H1 (cell line): ENCODE measurements at regions of chr2 and their contacts with region 1.

Region 1: GRCh38 chr2:121071034-121071504 is 213.9 kb downstream of the TFCP2L1 start:
- DNase-seq: peak in 1 of 2 experiments; percentile 98
- H3K4me3 ChIP-seq: no peak overlapping the region
- H3K27ac ChIP-seq: no peak overlapping the region
- H3K4me1 ChIP-seq: peaks cover 0 to 15% (median 13%) of the 10 kb centered on the region in 4 experiments; a peak in 6 of 7 replicates
- H3K27me3 ChIP-seq: peaks cover 0 to 7% (median 6%) of the 10 kb centered on the region in 4 experiments; a peak in 6 of 7 replicates
- CTCF ChIP-seq: peak in 2 of 3 experiments; percentile 78 to 84; a peak in 3 of 4 replicates
- EP300 ChIP-seq: no peak
- POLR2A ChIP-seq: no peak
- RAD21 ChIP-seq: peak; percentile 88 to 93

Region 2: GRCh38 chr2:120686511-120687168 is 384.4 kb before region 1 on chr2:
- CTCF ChIA-PET with region 1: interaction called, 88 read pairs
- POLR2A ChIA-PET with region 1: interaction called, 33 read pairs
- DNase-seq: no peak
- H3K4me3 ChIP-seq: no peak overlapping the region
- H3K27ac ChIP-seq: no peak overlapping the region
- H3K4me1 ChIP-seq: no peaks in the 10 kb centered on the region
- H3K27me3 ChIP-seq: peaks cover 0 to 6% (median 3%) of the 10 kb centered on the region in 4 experiments; a peak in 4 of 7 replicates
- CTCF ChIP-seq: peak; percentile 62 to 77 (median 70)
- EP300 ChIP-seq: no peak
- POLR2A ChIP-seq: no peak
- RAD21 ChIP-seq: peak; percentile 12 to 18; a peak in 3 of 4 replicates

Region 3: GRCh38 chr2:120703330-120703994 is 367.6 kb before region 1 on chr2:
- CTCF ChIA-PET with region 1: interaction called, 81 read pairs
- POLR2A ChIA-PET with region 1: interaction called, 26 read pairs
- DNase-seq: no peak
- H3K4me3 ChIP-seq: no peak overlapping the region
- H3K27ac ChIP-seq: no peak overlapping the region
- H3K4me1 ChIP-seq: peaks cover 2 to 22% (median 8%) of the 10 kb centered on the region in 4 experiments
- H3K27me3 ChIP-seq: peaks cover 0 to 11% (median 6%) of the 10 kb centered on the region in 4 experiments; a peak in 3 of 7 replicates
- CTCF ChIP-seq: no peak
- EP300 ChIP-seq: no peak
- POLR2A ChIP-seq: no peak
- RAD21 ChIP-seq: no peak

Region 4: GRCh38 chr2:121010998-121011397 is 60.1 kb before region 1 on chr2:
- CTCF ChIA-PET with region 1: interaction called, 10 read pairs
- POLR2A ChIA-PET with region 1: interaction called, 24 read pairs
- DNase-seq: no peak
- H3K4me3 ChIP-seq: no peak overlapping the region
- H3K27ac ChIP-seq: no peak overlapping the region
- H3K4me1 ChIP-seq: no peaks in the 10 kb centered on the region
- H3K27me3 ChIP-seq: no peaks in the 10 kb centered on the region
- CTCF ChIP-seq: no peak
- EP300 ChIP-seq: no peak
- POLR2A ChIP-seq: no peak
- RAD21 ChIP-seq: no peak

Region 5: GRCh38 chr2:121052521-121052920 is 18.5 kb before region 1 on chr2:
- CTCF ChIA-PET with region 1: interaction called, 23 read pairs
- POLR2A ChIA-PET with region 1: interaction called, 26 read pairs
- DNase-seq: no peak
- H3K4me3 ChIP-seq: no peak overlapping the region
- H3K27ac ChIP-seq: no peak overlapping the region
- H3K4me1 ChIP-seq: no peaks in the 10 kb centered on the region
- H3K27me3 ChIP-seq: peaks cover 0 to 4% (median 3%) of the 10 kb centered on the region in 4 experiments; a peak in 3 of 7 replicates
- CTCF ChIP-seq: no peak
- EP300 ChIP-seq: no peak
- POLR2A ChIP-seq: no peak
- RAD21 ChIP-seq: no peak

Region 6: DNA sequence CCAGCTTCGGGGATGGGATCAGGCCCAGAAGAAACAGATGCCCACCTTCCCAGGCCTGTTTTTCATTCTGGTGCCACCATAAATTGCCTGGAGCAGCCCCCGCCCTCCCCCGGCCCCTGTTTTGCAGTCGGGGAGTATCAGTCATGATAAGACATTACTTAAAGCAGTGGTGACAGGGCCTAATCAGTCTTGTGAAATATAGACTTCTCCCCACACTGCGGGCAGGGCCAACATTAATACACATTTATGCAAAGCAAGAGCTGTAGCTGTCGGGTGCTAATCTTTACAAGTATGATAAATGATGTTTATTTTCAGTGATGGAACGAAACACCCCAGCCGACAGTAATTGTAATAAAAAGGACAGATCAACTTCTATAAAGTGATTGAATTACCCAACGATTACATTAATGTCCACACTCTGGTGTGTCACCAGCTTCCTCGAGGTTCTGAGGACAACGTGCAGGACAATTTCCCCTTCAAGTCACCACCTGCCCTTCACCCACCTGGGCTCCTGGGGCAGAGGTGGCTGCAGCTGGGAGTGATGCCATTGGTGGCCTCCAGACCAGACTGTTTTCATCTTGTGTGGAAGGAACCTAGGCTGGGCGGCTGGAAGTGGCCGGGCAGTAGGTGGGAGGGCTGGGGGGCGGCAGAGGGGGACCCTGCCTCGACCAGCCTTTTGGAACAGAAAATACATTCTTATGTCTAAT is 12.1 kb before region 1 on chr2:
- CTCF ChIA-PET with region 1: interaction called, 15 read pairs
- POLR2A ChIA-PET with region 1: interaction called, 35 read pairs
- DNase-seq: no peak
- H3K4me3 ChIP-seq: no peak overlapping the region
- H3K27ac ChIP-seq: no peak overlapping the region
- H3K4me1 ChIP-seq: peaks cover 0 to 15% (median 4%) of the 10 kb centered on the region in 4 experiments; a peak in 6 of 7 replicates
- H3K27me3 ChIP-seq: peaks cover 0 to 17% (median 5%) of the 10 kb centered on the region in 4 experiments; a peak in 3 of 7 replicates
- CTCF ChIP-seq: no peak
- EP300 ChIP-seq: no peak
- POLR2A ChIP-seq: no peak
- RAD21 ChIP-seq: no peak

Region 7: GRCh38 chr2:121088251-121089165 is 17.4 kb after region 1 on chr2:
- CTCF ChIA-PET with region 1: interaction called, 434 read pairs
- POLR2A ChIA-PET with region 1: interaction called, 51 read pairs
- DNase-seq: no peak
- H3K4me3 ChIP-seq: no peak overlapping the region
- H3K27ac ChIP-seq: no peak overlapping the region
- H3K4me1 ChIP-seq: no peaks in the 10 kb centered on the region
- H3K27me3 ChIP-seq: no peaks in the 10 kb centered on the region; a peak in 2 of 7 replicates
- CTCF ChIP-seq: no peak
- EP300 ChIP-seq: no peak
- POLR2A ChIP-seq: no peak
- RAD21 ChIP-seq: no peak

Region 8: GRCh38 chr2:121266543-121267106 is 195.6 kb after region 1 on chr2:
- CTCF ChIA-PET with region 1: no interaction called
- POLR2A ChIA-PET with region 1: no interaction called
- DNase-seq: no peak
- H3K4me3 ChIP-seq: no peak overlapping the region
- H3K27ac ChIP-seq: no peak overlapping the region
- H3K4me1 ChIP-seq: no peaks in the 10 kb centered on the region
- H3K27me3 ChIP-seq: no peaks in the 10 kb centered on the region
- CTCF ChIP-seq: no peak
- EP300 ChIP-seq: no peak
- POLR2A ChIP-seq: no peak
- RAD21 ChIP-seq: no peak